Mammary epithelial cell (primary cell): ENCODE measurements at regions of chr17 and their contacts with region 1.

Region 1: GRCh38 chr17:39018267-39019134 is 51.3 kb upstream of the FBXO47 start:
- DNase-seq: no peak
- H3K4me3 ChIP-seq: no peak overlapping the region
- H3K27ac ChIP-seq: no peak overlapping the region
- H3K4me1 ChIP-seq: peaks cover 5% of the 10 kb centered on the region
- H3K27me3 ChIP-seq: no peaks in the 10 kb centered on the region
- CTCF ChIP-seq: no peak

Region 2: DNA sequence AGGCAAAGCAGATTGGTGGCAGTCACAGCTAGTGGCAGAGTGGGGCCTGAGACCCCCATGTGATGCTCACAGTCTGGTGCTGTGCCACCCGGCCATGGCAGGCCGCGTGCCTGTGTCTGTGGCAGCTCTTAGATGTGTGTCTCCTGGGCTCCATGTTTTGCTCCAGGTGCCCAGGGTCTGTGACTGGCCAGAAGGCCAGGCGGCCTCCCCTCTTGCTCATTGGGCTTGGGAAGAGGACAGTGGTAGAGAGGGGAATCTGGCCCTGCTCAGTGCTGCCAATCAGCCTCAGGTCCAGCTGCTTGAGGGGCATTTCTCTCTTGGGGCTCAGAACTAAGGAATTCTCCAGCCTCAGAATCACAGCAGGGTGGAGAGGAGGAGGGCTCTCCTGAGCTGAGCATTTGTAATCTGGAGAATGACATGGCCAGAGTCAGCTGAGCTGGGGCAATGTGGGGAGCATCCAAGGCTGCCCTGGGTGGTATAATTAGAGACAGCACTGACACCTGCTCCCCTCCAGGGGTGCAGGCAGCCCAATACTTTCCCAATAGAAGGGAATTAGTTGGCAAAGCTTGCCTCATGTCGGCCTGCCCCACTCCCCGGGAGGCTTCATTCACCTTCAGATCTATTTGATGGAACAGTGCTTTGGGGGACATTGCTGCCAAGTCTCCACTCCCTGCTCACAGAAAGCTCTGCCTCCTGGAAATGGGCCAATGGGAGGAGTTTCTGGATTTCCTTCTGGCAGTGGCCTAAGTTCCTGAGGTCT is 95.8 kb before region 1 on chr17:
- CTCF ChIA-PET with region 1: no interaction called
- dilution Hi-C with region 1: loop called (anchors 5 kb)
- in situ Hi-C with region 1: no loop called
- intact Hi-C with region 1: no loop called
- DNase-seq: peak; percentile 15
- H3K4me3 ChIP-seq: no peak overlapping the region
- H3K27ac ChIP-seq: no peak overlapping the region
- H3K4me1 ChIP-seq: no peaks in the 10 kb centered on the region
- H3K27me3 ChIP-seq: no peaks in the 10 kb centered on the region
- CTCF ChIP-seq: peak in 1 of 2 donors; percentile 0

Region 3: GRCh38 chr17:39057701-39058206 is 39.3 kb after region 1 on chr17:
- CTCF ChIA-PET with region 1: no interaction called
- dilution Hi-C with region 1: loop called (anchors 5 kb)
- in situ Hi-C with region 1: no loop called
- intact Hi-C with region 1: no loop called
- DNase-seq: no peak
- H3K4me3 ChIP-seq: peak overlapping the region; percentile 63 to 96 (median 96)
- H3K27ac ChIP-seq: no peak overlapping the region
- H3K4me1 ChIP-seq: peaks cover 13% of the 10 kb centered on the region
- H3K27me3 ChIP-seq: no peaks in the 10 kb centered on the region
- CTCF ChIP-seq: no peak

Region 4: DNA sequence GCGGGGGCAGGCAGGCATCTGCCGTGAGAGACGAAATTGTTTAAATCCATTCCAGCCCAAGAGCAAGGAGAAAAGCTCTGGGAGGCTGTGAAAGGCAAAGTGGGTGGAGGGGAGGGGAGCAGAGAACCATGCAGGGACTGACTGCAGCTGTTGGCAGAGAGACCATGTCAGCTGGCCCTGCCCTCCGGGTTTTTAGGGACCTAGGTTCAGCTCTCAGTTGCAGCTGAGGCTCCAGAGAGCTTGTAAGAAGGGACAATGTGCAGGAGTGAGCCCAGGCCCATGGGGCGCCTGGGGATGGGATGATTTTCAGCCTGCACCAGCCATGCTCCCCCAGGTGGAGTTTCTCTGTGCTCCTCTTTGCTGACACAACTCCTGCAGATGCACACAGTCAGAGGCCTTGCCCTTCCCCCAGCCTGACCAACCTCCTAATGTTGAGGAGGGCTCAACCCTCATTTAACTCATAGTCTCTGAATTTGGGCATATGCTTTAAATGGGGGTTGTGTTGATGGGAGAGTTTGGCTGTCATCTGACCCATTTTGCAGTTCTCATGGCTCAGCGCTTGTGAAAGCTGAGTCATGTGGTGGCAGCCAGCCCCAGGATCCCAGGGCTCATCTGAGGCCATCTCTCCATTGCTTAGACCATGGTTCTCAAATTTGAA is 62.0 kb after region 1 on chr17:
- CTCF ChIA-PET with region 1: no interaction called
- dilution Hi-C with region 1: no loop called
- in situ Hi-C with region 1: no loop called
- intact Hi-C with region 1: no loop called
- DNase-seq: no peak
- H3K4me3 ChIP-seq: no peak overlapping the region
- H3K27ac ChIP-seq: no peak overlapping the region
- H3K4me1 ChIP-seq: no peaks in the 10 kb centered on the region
- H3K27me3 ChIP-seq: no peaks in the 10 kb centered on the region
- CTCF ChIP-seq: no peak

Region 5: DNA sequence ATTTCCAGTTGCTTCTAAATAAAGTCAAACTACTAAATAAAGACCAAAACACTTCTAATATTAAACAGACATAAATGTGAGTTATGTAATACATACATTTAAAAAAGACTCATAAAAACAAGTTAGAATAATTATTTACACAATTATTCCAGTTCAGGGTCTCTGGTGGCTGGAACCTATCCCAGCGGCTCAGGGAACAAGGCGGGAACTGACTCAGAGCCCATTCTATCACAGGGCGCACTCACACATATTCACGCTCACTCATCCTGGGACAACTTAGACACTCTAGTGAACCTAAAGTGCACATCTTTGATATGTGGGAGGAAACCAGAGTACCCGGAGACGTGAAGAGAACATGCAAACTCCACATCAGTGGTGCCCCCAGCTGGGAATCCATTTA is 107.9 kb after region 1 on chr17:
- CTCF ChIA-PET with region 1: no interaction called
- dilution Hi-C with region 1: loop called (anchors 5 kb)
- in situ Hi-C with region 1: loop called in 1 of 2 experiments (anchors 25 kb)
- intact Hi-C with region 1: no loop called
- DNase-seq: no peak
- H3K4me3 ChIP-seq: no peak overlapping the region
- H3K27ac ChIP-seq: no peak overlapping the region
- H3K4me1 ChIP-seq: no peaks in the 10 kb centered on the region
- H3K27me3 ChIP-seq: no peaks in the 10 kb centered on the region
- CTCF ChIP-seq: no peak